PC-3 (cell line): ENCODE measurements at regions of chr2 and their contacts with region 1.

Region 1: DNA sequence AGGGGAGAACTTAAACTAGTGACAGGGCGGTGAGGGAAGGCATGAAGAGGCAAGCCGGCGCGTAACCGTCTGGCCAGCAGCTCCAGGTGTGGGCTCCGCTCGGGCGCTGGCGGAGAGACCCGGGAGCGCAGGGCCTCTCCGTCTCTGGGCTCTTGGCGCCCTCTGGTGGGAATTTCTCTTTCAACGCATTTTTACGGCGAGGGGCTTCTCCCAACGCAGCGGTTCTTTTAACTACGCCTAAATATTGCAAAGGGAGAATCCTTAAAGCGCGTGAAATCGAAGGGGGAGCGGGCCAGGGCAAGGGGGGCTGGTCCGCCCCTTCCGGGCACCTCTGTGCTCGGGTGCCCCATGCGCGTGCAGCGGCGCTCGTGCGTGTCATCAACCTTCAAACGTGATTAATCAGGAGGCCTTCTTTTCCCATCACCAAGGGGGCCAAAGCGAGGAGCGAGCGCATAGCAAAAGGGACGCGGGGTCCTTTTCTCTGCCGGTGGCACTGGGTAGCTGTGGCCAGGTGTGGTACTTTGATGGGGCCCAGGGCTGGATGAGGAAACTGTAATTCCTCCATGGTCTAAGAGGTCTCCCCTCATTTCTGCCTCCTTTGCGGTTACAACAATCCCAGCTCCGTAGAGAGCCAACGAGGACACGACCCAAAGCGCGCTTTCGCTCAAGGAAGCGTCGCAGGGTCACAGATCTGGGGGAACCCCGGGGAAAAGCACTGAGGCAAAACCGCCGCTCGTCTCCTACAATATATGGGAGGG is 762 bp upstream of the GAD1 start:
- DNase-seq: peak; percentile 82
- ATAC-seq: peak; percentile 47
- H3K4me3 ChIP-seq: peak overlapping the region; percentile 97
- H3K27ac ChIP-seq: no peak overlapping the region
- H3K4me1 ChIP-seq: peaks cover 13% of the 10 kb centered on the region; the same call in 1 of the 2 replicates
- H3K27me3 ChIP-seq: no peaks in the 10 kb centered on the region
- CTCF ChIP-seq: peak; percentile 89

Region 2: DNA sequence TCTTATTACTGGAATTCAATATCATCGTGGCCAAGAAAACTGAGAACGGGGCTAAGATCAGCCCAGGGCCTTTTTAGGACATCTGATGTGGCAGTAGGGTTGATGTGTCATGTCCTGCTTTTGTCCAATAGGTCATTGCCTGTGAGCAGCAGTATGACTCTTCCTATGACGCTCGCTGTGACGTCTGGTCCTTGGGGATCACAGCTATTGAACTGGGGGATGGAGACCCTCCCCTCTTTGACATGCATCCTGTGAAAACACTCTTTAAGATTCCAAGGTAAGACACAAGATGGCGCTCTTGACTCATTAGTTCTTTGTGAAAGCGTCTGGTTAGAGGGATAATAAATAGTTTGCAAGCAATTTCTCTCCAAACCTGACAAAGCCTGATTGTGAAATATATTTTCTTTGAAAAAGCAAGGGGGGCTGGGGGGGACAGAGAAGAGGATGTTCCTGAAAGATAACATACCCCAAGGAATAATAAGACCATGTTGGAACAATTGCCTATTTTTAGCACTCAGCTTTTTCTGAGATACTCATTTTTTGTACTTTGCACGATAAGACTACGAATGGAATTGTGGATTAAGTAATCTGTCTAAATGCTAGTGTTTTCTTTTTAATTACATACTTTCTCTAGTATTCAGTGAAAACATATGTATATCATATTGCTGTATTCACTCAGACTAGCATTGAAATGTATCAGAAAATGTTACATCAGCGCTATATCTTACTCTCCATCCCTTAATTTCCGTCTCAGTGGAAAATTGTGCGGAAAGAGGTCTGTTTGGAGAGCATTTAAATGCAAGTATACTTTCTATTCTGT is 579.9 kb before region 1 on chr2:
- CTCF ChIA-PET with region 1: no interaction called
- POLR2A ChIA-PET with region 1: no interaction called
- intact Hi-C with region 1: loop called (anchors 2 kb)
- DNase-seq: peak; percentile 84
- ATAC-seq: peak; percentile 51; the same call in 1 of the 2 replicates
- H3K4me3 ChIP-seq: no peak overlapping the region
- H3K27ac ChIP-seq: no peak overlapping the region
- H3K4me1 ChIP-seq: peaks cover 13% of the 10 kb centered on the region
- H3K27me3 ChIP-seq: no peaks in the 10 kb centered on the region
- CTCF ChIP-seq: peak; percentile 87

Region 3: GRCh38 chr2:170396799-170397459 is 419.0 kb before region 1 on chr2:
- CTCF ChIA-PET with region 1: interaction called, 3 read pairs
- POLR2A ChIA-PET with region 1: no interaction called
- intact Hi-C with region 1: loop called (anchors 1 kb)
- DNase-seq: peak; percentile 63
- ATAC-seq: peak; percentile 68
- H3K4me3 ChIP-seq: no peak overlapping the region
- H3K27ac ChIP-seq: no peak overlapping the region
- H3K4me1 ChIP-seq: peaks cover 11% of the 10 kb centered on the region
- H3K27me3 ChIP-seq: no peaks in the 10 kb centered on the region
- CTCF ChIP-seq: peak; percentile 80

Region 4: GRCh38 chr2:170498619-170499018 is 317.3 kb before region 1 on chr2:
- CTCF ChIA-PET with region 1: no interaction called
- POLR2A ChIA-PET with region 1: no interaction called
- intact Hi-C with region 1: loop called (anchors 5 kb)
- DNase-seq: no peak
- ATAC-seq: no peak
- H3K4me3 ChIP-seq: no peak overlapping the region
- H3K27ac ChIP-seq: no peak overlapping the region
- H3K4me1 ChIP-seq: peaks cover 11% of the 10 kb centered on the region; the same call in 1 of the 2 replicates
- H3K27me3 ChIP-seq: no peaks in the 10 kb centered on the region
- CTCF ChIP-seq: no peak

Region 5: GRCh38 chr2:170843656-170844055 is 27.7 kb after region 1 on chr2:
- CTCF ChIA-PET with region 1: no interaction called
- POLR2A ChIA-PET with region 1: no interaction called
- intact Hi-C with region 1: loop called (anchors 2 kb)
- DNase-seq: peak; percentile 94
- ATAC-seq: peak; percentile 100
- H3K4me3 ChIP-seq: no peak overlapping the region
- H3K27ac ChIP-seq: 0 out of 2 replicates have a peak overlapping the region, but pooled peaks have one; percentile 6
- H3K4me1 ChIP-seq: peaks cover 24% of the 10 kb centered on the region
- H3K27me3 ChIP-seq: no peaks in the 10 kb centered on the region
- CTCF ChIP-seq: no peak

Region 6: DNA sequence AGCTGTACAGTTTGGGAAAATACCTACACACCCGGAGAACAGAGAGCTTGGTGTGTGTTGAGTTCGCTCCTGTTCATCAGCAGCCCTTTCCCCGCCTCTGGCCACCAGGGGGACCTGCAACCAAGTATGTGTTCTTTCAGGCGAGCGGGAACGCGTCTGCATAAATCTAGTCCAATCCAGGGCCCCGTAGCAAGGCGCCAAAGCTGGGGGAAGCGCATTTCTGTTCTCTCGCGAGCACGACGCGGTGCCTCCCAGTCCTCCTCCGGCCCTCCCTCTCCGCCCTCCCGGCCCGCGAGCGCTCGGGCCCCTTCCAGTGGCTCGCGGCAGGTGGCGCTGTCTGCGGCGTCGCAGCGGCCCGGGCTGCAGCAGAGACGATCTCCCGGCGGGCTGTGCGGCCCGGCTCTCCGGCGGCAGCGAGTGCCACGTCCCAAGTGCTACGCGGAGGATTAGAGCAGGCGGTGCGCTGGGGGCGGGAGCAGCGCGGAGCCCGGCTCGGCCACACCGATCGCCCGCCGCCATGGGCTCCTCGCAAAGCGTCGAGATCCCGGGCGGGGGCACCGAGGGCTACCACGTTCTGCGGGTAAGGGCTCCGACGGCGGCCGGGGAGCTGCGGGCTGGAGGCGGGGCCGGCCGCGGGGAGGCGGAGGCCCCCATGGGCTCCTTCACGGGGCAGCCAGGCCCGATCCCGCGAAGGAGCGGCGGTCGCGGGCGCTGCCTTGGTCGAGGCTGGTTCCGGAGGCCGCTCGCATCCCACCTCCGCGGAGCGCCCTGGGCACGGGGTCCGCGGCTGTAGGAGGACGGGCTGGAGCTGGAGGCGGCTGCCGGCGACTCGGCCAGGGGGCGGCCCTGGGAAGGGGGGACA is 113.1 kb after region 1 on chr2 and contains the start of gene GORASP2:
- CTCF ChIA-PET with region 1: interaction called, 5 read pairs
- POLR2A ChIA-PET with region 1: no interaction called
- intact Hi-C with region 1: loop called (anchors 1 kb)
- DNase-seq: peak; percentile 99
- ATAC-seq: peak; percentile 91
- H3K4me3 ChIP-seq: peak within 1 kb of the TSS; percentile 93
- H3K27ac ChIP-seq: peak within 1 kb of the TSS; percentile 57
- H3K4me1 ChIP-seq: peaks cover 26% of the 10 kb centered on the region
- H3K27me3 ChIP-seq: no peaks in the 10 kb centered on the region
- CTCF ChIP-seq: peak; percentile 89
- total RNA-seq, gene GORASP2: 44.5 and 67.3 TPM in 2 replicates

Region 7: GRCh38 chr2:172052000-172052983 is 1236.4 kb after region 1 on chr2:
- CTCF ChIA-PET with region 1: no interaction called
- POLR2A ChIA-PET with region 1: no interaction called
- intact Hi-C with region 1: no loop called
- DNase-seq: no peak
- ATAC-seq: no peak
- H3K4me3 ChIP-seq: no peak overlapping the region
- H3K27ac ChIP-seq: no peak overlapping the region
- H3K4me1 ChIP-seq: no peaks in the 10 kb centered on the region
- H3K27me3 ChIP-seq: no peaks in the 10 kb centered on the region
- CTCF ChIP-seq: no peak